Aorta (tissue), 5 donors: ENCODE measurements at regions of chr2 and their contacts with region 1.

Region 1: DNA sequence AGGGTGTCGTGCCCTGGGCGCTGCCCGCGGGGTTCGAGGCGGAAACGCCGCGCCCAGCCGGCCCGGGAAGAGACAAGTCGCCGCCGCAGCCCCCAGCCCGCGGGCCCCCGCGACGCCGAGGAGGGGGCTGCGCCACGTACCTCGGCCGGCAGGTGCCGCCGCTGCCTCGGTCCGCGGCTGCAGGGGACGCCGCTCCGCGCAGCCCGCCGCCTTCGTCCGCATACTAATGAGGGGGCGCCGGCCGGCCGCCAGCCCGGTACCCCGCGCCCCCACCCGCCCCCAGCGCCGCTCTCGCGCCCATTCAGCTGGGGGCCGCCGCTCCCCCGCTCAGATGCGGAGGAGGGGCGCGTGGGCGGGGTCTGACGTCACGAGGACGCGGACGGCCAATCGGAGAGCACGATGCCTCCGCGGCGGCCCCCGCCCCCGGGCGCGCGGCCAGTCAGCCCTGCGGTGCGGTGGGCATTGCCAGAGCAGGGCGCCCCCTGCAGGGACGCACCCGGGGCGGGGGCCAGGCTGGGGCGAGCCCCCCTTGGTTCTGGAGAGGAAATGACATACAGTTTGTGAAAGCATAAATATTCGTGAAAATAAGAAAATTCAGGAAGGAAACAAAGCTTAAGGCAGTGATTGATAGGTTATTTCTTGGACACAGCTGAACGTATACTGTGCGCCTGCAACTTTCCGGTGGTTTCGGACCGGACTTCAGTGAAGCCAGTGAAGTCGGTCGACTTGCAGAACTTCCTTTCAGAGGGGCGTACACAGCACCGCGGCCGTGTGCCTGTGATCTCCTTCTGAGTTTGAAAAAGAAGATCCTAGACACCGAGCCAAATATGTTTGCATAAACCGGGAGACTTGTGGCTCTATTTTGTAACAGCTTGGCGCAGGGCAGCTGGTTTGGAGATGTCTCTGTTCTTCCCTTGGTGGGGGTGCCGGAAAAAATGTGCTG is at the start of gene ST3GAL5:
- DNase-seq: peak; percentile 96 to 97
- ATAC-seq: peak; percentile 93
- H3K4me3 ChIP-seq: peak within 1 kb of the TSS; percentile 71 to 75
- H3K27ac ChIP-seq: peak within 1 kb of the TSS; percentile 19 to 38
- H3K4me1 ChIP-seq: no peaks in the 10 kb centered on the region
- H3K27me3 ChIP-seq: no peaks in the 10 kb centered on the region
- total RNA-seq, gene ST3GAL5: 15.7 to 29.8 TPM

Region 2: GRCh38 chr2:85741833-85742455 is 147.0 kb before region 1 on chr2:
- intact Hi-C with region 1: loop called in 1 of 2 experiments (anchors 10 kb)
- DNase-seq: peak; percentile 90 to 93
- ATAC-seq: peak; percentile 81
- H3K4me3 ChIP-seq: no peak overlapping the region
- H3K27ac ChIP-seq: peak overlapping the region; percentile 73 to 98
- H3K4me1 ChIP-seq: peaks cover 0 to 11% of the 10 kb centered on the region in 2 donors
- H3K27me3 ChIP-seq: no peaks in the 10 kb centered on the region

Region 3: DNA sequence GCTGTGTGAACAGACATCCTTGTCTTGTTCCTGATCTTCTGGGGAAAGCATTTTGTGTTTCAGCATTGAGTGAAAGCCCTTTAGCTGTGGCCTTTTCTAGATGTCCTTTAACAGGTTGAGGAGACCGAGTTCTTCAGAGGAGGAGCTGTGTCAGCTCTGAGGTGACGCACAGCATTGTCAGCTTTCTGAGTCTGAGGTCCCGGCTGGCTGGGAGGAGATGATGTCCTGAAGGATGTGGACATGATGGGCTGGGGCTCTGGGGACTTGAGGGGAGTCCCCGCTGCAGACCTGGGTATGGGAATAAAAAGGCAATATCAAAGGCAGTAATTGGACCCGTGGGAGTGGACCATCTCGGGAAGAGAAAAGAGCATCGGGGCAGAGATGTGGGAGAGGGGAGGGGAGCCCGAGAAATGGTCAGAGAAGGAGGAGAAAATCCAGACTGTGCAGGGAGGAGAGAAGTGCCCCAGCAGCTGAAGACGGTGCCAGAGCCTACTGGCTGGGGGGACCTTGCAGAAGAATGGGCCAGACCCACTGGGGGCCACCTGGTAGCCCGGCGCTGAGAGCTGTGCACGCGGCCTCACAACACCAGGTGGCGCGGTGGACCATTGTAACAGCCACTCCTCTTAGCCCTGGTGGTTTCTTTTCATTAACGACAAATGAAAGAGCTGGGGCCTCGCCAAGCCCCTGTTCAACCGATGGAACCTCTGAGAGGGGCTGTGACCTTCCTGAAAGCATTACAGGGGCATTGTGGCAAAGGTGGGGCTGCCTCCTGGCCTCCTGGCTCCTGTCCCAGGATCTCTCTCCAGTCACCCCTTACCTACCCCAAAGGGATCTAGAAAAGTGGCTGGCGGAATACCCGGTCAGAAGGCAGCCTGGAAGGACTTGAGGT is 61.7 kb before region 1 on chr2:
- intact Hi-C with region 1: loop called in 1 of 2 experiments (anchors 5 kb)
- DNase-seq: peak; percentile 83 to 93
- ATAC-seq: peak; percentile 94
- H3K4me3 ChIP-seq: no peak overlapping the region
- H3K27ac ChIP-seq: no peak overlapping the region
- H3K4me1 ChIP-seq: no peaks in the 10 kb centered on the region
- H3K27me3 ChIP-seq: no peaks in the 10 kb centered on the region

Region 4: DNA sequence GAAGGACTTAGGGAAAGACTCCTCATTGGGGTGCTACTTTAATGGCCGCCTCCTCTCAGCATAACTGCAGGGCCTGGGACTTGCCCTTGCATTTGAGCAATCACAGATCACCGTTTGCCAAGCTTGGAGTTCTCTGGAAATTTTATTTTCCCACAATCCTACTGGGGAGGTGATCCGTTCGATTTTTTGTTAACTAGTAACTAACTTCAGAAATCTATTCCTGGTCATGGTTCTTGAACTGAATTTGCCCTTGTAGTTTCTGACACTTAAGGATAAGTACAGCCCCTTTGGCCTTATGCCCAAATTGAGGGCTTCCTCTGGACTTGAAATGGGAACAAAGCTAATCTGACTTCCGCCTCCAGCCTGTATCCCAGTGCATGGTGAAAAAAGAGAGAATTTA is 60.3 kb after region 1 on chr2:
- intact Hi-C with region 1: no loop called
- DNase-seq: no peak
- ATAC-seq: no peak
- H3K4me3 ChIP-seq: no peak overlapping the region
- H3K27ac ChIP-seq: no peak overlapping the region
- H3K4me1 ChIP-seq: no peaks in the 10 kb centered on the region
- H3K27me3 ChIP-seq: no peaks in the 10 kb centered on the region

Region 5: GRCh38 chr2:85971366-85971765 is 82.4 kb after region 1 on chr2:
- intact Hi-C with region 1: no loop called
- DNase-seq: no peak
- ATAC-seq: no peak
- H3K4me3 ChIP-seq: no peak overlapping the region
- H3K27ac ChIP-seq: no peak overlapping the region
- H3K4me1 ChIP-seq: no peaks in the 10 kb centered on the region
- H3K27me3 ChIP-seq: no peaks in the 10 kb centered on the region

Region 6: GRCh38 chr2:85999061-85999831 is 110.3 kb after region 1 on chr2:
- intact Hi-C with region 1: loop called in 1 of 2 experiments (anchors 10 kb)
- DNase-seq: peak; percentile 44 to 55
- ATAC-seq: no peak
- H3K4me3 ChIP-seq: no peak overlapping the region
- H3K27ac ChIP-seq: peak overlapping the region; percentile 24 to 93
- H3K4me1 ChIP-seq: peaks cover 0 to 6% of the 10 kb centered on the region in 2 donors
- H3K27me3 ChIP-seq: no peaks in the 10 kb centered on the region

Region 7: GRCh38 chr2:86011449-86011941 is 122.5 kb after region 1 on chr2:
- intact Hi-C with region 1: no loop called
- DNase-seq: peak in 1 of 2 donors; percentile 32
- ATAC-seq: no peak
- H3K4me3 ChIP-seq: no peak overlapping the region
- H3K27ac ChIP-seq: no peak overlapping the region
- H3K4me1 ChIP-seq: no peaks in the 10 kb centered on the region
- H3K27me3 ChIP-seq: no peaks in the 10 kb centered on the region

Region 8: DNA sequence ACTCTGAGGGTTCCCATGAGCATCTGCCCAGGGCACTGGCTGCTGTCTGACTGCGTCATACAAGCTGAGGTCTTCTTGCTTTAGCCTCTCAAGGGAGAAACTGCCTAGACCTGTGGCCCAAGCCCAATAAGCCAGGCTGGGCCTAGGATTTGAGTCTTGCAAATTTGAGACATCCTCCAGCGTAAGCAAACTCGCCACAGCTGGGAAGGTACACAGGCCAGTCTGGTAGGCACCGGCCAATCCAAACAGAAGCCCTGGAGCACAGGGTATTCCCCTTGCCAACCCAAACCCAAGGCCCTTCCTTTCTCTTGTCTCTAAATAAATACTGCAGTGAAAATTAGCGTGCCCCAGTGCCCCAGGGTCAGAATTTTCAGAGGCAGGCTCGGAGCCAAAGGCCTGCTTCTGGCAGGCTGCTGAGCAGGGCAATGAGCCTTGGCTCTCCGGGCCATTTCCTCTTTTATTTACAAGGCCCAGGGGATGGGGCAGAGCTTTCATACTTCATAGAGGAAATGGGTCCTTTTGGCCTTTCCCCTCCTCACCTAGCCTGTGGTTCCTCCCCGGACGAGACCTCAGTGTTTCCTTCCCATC is 183.4 kb after region 1 on chr2:
- intact Hi-C with region 1: loop called in 1 of 2 experiments (anchors 5 kb)
- DNase-seq: peak; percentile 86 to 89
- ATAC-seq: peak; percentile 93
- H3K4me3 ChIP-seq: no peak overlapping the region
- H3K27ac ChIP-seq: peak overlapping the region; percentile 15 to 85
- H3K4me1 ChIP-seq: peaks cover 0 to 3% of the 10 kb centered on the region in 2 donors
- H3K27me3 ChIP-seq: no peaks in the 10 kb centered on the region

Region 9: DNA sequence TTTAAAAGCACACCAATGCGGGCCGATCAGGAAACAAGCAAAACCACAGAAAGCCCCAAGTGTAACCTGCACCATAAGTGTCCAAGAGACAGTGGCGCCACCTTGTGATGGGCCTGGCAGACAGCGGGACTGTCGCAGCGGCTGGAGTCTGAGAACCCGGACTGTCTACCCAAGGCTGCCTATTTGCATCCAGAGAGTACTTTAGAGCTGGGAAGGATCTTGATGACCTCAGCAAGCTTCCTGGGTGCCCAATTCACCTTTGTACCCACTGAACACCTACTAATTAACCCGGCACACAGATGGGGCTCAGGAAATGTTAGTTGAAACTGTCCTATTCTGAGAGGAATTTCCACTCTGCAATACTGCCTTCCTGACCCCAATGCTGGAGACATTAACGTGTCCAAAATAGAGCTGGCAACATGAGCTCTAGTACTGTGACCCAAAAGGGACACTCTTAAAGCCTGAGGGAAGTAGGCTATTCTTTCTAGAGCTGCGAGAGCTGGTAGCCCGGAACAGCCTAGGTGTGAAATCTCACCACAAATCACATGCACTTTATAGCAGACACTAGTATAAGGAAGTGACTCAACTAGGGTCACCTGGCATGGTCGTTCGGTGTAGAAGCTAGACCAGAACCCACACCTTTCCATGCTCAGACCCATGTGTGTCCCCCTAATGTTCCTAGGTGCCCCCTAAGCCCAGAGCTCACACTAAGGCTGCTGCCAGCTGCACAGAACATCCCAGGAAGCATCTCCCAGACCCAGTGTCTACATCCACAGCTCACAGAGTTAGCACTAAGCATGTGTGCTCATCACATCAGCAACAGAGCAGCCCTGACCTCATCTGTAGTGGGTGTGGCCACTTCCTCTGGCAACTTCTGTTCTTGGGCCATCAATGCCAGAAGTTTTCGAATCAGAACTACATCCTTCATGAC is 191.3 kb after region 1 on chr2:
- intact Hi-C with region 1: loop called in 1 of 2 experiments (anchors 2 kb)
- DNase-seq: peak; percentile 89 to 94
- ATAC-seq: peak; percentile 92
- H3K4me3 ChIP-seq: no peak overlapping the region
- H3K27ac ChIP-seq: no peak overlapping the region
- H3K4me1 ChIP-seq: no peaks in the 10 kb centered on the region
- H3K27me3 ChIP-seq: no peaks in the 10 kb centered on the region

Region 10: GRCh38 chr2:86319700-86320580 is 431.0 kb after region 1 on chr2:
- intact Hi-C with region 1: no loop called
- DNase-seq: no peak
- ATAC-seq: no peak
- H3K4me3 ChIP-seq: no peak overlapping the region
- H3K27ac ChIP-seq: no peak overlapping the region
- H3K4me1 ChIP-seq: no peaks in the 10 kb centered on the region
- H3K27me3 ChIP-seq: no peaks in the 10 kb centered on the region